Heart right ventricle (tissue), 16 donors: ENCODE measurements at regions of chr10 and their contacts with region 1.

Region 1: DNA sequence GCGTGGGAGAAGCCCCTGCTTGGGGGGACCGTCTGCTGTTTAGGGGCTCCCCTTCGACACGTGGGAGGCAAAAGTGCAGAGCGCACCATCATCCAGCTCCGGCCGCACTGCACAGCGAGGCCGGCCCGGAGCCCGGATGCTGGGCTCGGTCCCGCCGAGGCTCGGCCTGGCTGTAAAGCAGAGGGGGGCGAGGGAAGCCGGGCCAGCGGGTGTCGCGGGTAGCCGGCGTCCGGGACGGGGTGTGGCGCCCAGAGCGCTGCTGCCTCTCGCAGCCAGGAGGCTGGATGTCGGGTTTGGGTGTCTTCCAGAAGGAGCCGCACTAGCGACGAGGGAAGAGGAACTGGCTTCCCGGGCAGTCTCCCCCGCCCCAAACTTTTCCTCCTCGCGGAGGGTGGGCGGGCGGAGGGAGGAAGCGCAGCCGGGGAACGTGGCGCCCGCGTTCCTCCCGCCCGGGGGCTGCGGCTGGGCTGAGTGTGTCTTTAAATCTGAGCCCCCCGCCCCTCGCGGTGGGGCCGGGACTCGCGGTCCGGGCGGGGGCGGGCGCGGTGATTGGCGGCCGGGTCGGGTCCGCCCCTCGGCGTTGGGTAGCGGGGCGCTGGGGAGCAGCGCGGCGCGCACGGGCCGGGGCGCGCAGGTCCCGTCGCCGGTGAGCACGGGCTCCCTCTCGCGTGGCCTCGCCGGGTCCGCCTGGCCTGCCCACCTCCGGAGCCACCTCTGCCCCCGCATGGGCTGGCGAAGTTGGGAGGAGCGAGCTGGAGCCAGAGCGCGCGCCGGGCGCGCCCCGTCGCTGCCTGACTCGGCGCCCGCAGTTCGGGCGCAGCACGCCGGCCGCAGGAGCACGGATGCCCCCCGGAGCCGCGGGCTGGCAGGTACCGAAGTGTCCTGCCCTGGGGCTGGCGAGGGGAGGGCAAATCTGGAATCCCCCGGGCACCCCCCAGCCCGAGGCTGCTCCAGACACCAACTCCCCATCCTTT is at the start of gene PALD1:
- DNase-seq: peak; percentile 81 to 89
- ATAC-seq: peak; percentile 48 to 81 (median 72)
- H3K4me3 ChIP-seq: peak within 1 kb of the TSS; percentile 40 to 77 (median 64)
- H3K27ac ChIP-seq: peak within 1 kb of the TSS; percentile 34 to 91 (median 82)
- H3K4me1 ChIP-seq: peaks cover 38 to 65% (median 55%) of the 10 kb centered on the region in 9 donors
- H3K27me3 ChIP-seq: peaks cover 0 to 32% (median 0%) of the 10 kb centered on the region in 7 donors
- CTCF ChIP-seq: peak; percentile 20 to 67 (median 27)
- total RNA-seq, gene PALD1: 4.8 to 10.3 (median 6.1) TPM

Region 2: DNA sequence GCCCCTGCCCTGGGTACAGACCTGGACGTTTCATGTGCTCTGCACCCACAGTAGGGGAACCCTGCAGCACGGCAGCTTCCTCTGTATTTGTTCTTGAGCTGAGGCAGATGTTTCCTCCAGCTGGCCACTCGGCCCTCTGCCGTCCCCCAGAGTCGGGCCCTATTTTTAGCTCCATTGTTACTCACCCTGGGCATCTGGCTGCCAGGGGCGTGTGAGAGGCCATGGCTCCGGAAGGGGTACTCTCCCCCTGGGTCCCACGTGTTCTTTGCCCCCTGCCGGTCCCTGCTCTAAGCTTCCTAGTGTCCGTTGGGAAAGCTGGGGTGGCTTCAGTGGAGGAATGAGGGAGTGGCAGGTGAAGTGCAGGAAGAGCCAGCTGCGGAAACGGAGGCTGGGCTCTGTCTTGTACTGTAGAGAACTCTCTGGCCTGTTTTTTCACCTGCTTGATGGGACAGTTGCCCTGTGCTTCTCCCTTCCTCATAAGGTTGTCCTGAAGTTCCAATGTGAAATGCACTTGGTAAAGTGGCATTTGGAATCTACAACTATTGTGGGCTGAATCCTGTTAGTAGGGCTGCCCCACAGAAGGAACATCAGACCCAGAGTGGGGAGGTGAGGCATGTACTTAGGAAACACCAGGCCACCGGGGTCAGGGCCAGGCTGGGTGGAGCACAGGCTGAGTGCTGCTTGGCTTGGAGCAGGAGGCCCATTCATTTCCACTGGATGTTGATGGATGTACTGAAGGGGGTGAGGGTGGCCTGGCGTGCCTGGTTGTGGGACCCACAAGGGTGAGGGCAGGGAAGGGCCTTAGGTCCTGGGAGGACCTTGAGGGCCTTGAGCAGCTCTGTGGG is 30.7 kb after region 1 on chr10:
- intact Hi-C with region 1: loop called in 2 of 10 experiments (anchors 1 to 5 kb)
- DNase-seq: peak; percentile 64 to 76
- ATAC-seq: peak; percentile 70 to 87 (median 86)
- H3K4me3 ChIP-seq: peak overlapping the region in 2 of 10 donors; percentile 16 to 24
- H3K27ac ChIP-seq: peak overlapping the region in 9 of 10 donors; percentile 54 to 87 (median 73)
- H3K4me1 ChIP-seq: peaks cover 29 to 81% (median 58%) of the 10 kb centered on the region in 9 donors
- H3K27me3 ChIP-seq: no peaks in the 10 kb centered on the region
- CTCF ChIP-seq: peak in 4 of 9 donors; percentile 6 to 17 (median 8)